Ovary (tissue), 10 donors: ENCODE measurements at regions of chr7 and their contacts with region 1.

Region 1: GRCh38 chr7:109029866-109030265 is 460.2 kb downstream of the DNAJB9 start:
- DNase-seq: no peak
- H3K4me3 ChIP-seq: no peak overlapping the region
- H3K27ac ChIP-seq: no peak overlapping the region
- H3K4me1 ChIP-seq: no peaks in the 10 kb centered on the region
- H3K27me3 ChIP-seq: no peaks in the 10 kb centered on the region
- CTCF ChIP-seq: no peak
- EP300 ChIP-seq: no peak
- POLR2A ChIP-seq: no peak

Region 2: GRCh38 chr7:108973075-108973474 is 56.8 kb before region 1 on chr7:
- intact Hi-C with region 1: no loop called
- DNase-seq: no peak
- H3K4me3 ChIP-seq: no peak overlapping the region
- H3K27ac ChIP-seq: no peak overlapping the region
- H3K4me1 ChIP-seq: no peaks in the 10 kb centered on the region
- H3K27me3 ChIP-seq: no peaks in the 10 kb centered on the region
- CTCF ChIP-seq: no peak
- EP300 ChIP-seq: no peak
- POLR2A ChIP-seq: no peak

Region 3: GRCh38 chr7:109059089-109059488 is 29.2 kb after region 1 on chr7:
- intact Hi-C with region 1: loop called in 1 of 4 experiments (anchors 2 kb)
- DNase-seq: no peak
- H3K4me3 ChIP-seq: no peak overlapping the region
- H3K27ac ChIP-seq: no peak overlapping the region
- H3K4me1 ChIP-seq: no peaks in the 10 kb centered on the region
- H3K27me3 ChIP-seq: no peaks in the 10 kb centered on the region
- CTCF ChIP-seq: no peak
- EP300 ChIP-seq: no peak
- POLR2A ChIP-seq: no peak

Region 4: DNA sequence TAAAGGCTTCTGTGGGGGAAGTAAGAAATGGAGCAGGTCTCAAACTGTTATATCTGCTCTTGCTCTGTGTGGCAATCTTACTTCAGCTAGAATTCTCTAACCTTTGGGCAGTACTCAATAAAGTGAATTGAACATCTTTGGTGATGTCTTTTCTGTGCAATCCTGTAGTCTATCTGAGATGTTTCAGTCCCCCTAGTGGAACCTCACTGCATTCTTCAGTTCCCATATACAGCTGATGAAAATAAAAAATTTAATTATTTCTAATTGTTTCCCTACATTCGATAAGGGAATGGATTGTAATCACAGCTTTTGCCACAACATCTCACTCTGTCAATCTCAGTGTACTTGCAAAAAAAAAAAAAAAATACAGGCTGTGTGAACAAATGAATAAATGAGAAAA is 62.4 kb after region 1 on chr7:
- intact Hi-C with region 1: no loop called
- DNase-seq: no peak
- H3K4me3 ChIP-seq: no peak overlapping the region
- H3K27ac ChIP-seq: no peak overlapping the region
- H3K4me1 ChIP-seq: no peaks in the 10 kb centered on the region
- H3K27me3 ChIP-seq: no peaks in the 10 kb centered on the region
- CTCF ChIP-seq: no peak
- EP300 ChIP-seq: no peak
- POLR2A ChIP-seq: no peak

Region 5: DNA sequence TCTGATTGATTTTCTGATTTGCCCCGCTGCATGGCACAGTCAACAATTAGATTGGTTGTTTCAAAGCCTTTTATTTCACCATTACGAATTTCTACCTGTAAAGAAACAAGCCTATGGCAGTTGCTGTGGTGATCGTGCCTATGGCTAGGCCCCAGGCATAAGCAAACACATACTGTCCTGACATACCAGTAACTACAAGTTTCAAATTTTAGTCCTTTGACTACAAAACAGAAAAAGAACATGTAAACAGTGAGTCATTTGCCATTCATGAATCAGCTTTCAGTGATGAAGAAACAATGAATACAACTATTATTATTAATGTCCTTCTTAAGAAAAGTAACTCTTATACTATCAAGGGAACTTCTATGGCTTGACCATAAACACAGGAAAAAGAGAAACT is 1893.0 kb after region 1 on chr7:
- intact Hi-C with region 1: no loop called
- DNase-seq: no peak
- H3K4me3 ChIP-seq: no peak overlapping the region
- H3K27ac ChIP-seq: no peak overlapping the region
- H3K4me1 ChIP-seq: peaks cover 4% of the 10 kb centered on the region
- H3K27me3 ChIP-seq: no peaks in the 10 kb centered on the region
- CTCF ChIP-seq: no peak
- EP300 ChIP-seq: no peak
- POLR2A ChIP-seq: no peak